ENCODE measurements at regions of chr4 and their contacts with region 1.

Region 1: GRCh38 chr4:121800961-121801714 is at the start of gene EXOSC9:
- H3K4me3 Mint-ChIP-seq: peak within 1 kb of the TSS; percentile 83
- H3K27ac Mint-ChIP-seq: peak within 1 kb of the TSS; percentile 89
- H3K4me1 Mint-ChIP-seq: peaks cover 18% of the 10 kb centered on the region
- H3K27me3 Mint-ChIP-seq: peaks cover 2% of the 10 kb centered on the region

Region 2: GRCh38 chr4:121696581-121697461 is 104.3 kb before region 1 on chr4 and contains the start of gene ANXA5:
- intact Hi-C with region 1: loop called (anchors 1 kb)
- H3K4me3 Mint-ChIP-seq: peak within 1 kb of the TSS; percentile 100
- H3K27ac Mint-ChIP-seq: peak within 1 kb of the TSS; percentile 99
- H3K4me1 Mint-ChIP-seq: peaks cover 38% of the 10 kb centered on the region
- H3K27me3 Mint-ChIP-seq: peaks cover 25% of the 10 kb centered on the region

Region 3: GRCh38 chr4:121823505-121824170 is 22.5 kb after region 1 on chr4 and contains the start of gene CCNA2:
- intact Hi-C with region 1: loop called (anchors 1 kb)
- H3K4me3 Mint-ChIP-seq: peak within 1 kb of the TSS; percentile 96
- H3K27ac Mint-ChIP-seq: peak within 1 kb of the TSS; percentile 75
- H3K4me1 Mint-ChIP-seq: peaks cover 19% of the 10 kb centered on the region
- H3K27me3 Mint-ChIP-seq: no peaks in the 10 kb centered on the region

Region 4: DNA sequence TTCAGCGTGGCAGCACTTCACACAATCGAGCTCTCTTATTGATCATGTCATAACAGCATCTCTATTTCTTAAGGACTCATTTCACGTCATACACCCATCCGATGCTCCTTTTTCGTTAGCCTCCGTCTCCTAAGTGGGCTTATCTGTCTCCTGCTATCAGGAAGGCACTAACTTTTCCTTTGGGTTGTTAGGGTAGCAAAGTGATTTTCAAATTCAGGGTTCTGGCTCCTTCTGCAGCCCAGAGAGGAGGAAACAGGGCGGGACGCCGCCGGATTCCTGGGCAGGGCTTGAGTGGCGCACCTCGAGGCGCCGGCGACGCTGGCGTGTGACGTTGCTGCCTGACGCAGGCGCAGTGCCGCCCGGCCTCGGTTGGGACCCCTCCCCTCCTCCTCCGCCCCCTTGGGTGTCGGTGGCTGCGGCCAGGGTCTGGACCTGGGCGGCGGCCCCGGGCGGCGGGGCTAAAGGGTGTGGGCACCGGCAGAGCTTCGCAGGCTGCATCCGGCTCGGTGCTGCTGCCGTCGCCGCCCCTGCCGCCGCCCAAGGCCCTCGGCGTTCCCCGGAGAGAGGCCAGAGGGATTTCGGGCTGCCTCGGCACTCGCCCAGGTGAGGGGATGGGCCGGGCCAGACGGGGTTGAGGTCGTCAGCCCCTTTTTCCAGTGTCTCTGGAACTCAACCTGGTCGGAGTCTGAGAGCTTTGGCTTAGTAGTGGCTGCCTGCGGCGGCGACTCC is 351.0 kb after region 1 on chr4 and contains the start of gene BLTP1:
- intact Hi-C with region 1: loop called (anchors 5 kb)
- H3K4me3 Mint-ChIP-seq: peak within 1 kb of the TSS; percentile 87
- H3K27ac Mint-ChIP-seq: peak within 1 kb of the TSS; percentile 83
- H3K4me1 Mint-ChIP-seq: peaks cover 34% of the 10 kb centered on the region
- H3K27me3 Mint-ChIP-seq: no peaks in the 10 kb centered on the region